ENCODE measurements at regions of chr4 and their contacts with region 1.

Region 1: DNA sequence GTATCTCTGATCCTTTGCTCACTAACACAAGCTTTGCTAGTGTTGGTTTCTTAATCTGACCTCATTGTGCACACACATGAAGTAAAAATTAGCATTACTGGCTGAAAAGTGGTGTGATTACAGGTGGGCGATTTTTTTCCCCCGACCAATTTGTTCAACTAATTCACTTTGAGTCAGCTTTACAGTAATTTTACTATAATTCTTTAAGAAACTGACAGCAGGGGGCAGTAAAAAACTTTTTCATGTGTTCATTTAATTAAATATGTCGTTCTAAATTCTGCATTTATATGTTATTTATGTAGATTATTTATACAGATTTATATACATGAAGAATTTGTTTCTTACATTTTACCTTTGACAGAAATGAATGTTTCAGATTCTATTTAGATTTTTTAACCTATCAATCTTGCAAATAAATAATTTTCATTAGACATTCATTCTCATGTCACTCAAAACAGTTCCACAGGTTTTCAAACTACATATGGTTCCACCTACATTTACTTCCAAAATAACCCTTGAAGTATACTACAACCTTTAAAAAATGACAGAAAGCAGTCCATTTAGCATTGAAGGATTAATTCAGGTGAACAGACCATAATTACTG is 17.5 kb downstream of the PALLD start:
- DNase-seq: no peak
- H3K4me3 Mint-ChIP-seq: no peak overlapping the region
- H3K27ac Mint-ChIP-seq: no peak overlapping the region
- H3K4me1 Mint-ChIP-seq: peaks cover 30% of the 10 kb centered on the region
- H3K27me3 Mint-ChIP-seq: no peaks in the 10 kb centered on the region

Region 2: GRCh38 chr4:168183717-168184608 is 330.4 kb before region 1 on chr4:
- CTCF ChIA-PET with region 1: no interaction called
- POLR2A ChIA-PET with region 1: no interaction called
- intact Hi-C with region 1: loop called (anchors 1 kb)
- DNase-seq: no peak
- H3K4me3 Mint-ChIP-seq: no peak overlapping the region
- H3K27ac Mint-ChIP-seq: no peak overlapping the region
- H3K4me1 Mint-ChIP-seq: no peaks in the 10 kb centered on the region
- H3K27me3 Mint-ChIP-seq: no peaks in the 10 kb centered on the region

Region 3: GRCh38 chr4:168480931-168481611 is 33.3 kb before region 1 on chr4:
- CTCF ChIA-PET with region 1: interaction called, 4 read pairs
- POLR2A ChIA-PET with region 1: interaction called, 5 read pairs
- intact Hi-C with region 1: loop called (anchors 1 kb)
- DNase-seq: peak; percentile 53
- H3K4me3 Mint-ChIP-seq: peak overlapping the region; percentile 85
- H3K27ac Mint-ChIP-seq: peak overlapping the region; percentile 88
- H3K4me1 Mint-ChIP-seq: peaks cover 51% of the 10 kb centered on the region
- H3K27me3 Mint-ChIP-seq: no peaks in the 10 kb centered on the region

Region 4: GRCh38 chr4:168569066-168569970 is 55.0 kb after region 1 on chr4:
- CTCF ChIA-PET with region 1: no interaction called
- POLR2A ChIA-PET with region 1: no interaction called
- intact Hi-C with region 1: loop called (anchors 1 kb)
- DNase-seq: peak; percentile 40
- H3K4me3 Mint-ChIP-seq: no peak overlapping the region
- H3K27ac Mint-ChIP-seq: no peak overlapping the region
- H3K4me1 Mint-ChIP-seq: peaks cover 12% of the 10 kb centered on the region
- H3K27me3 Mint-ChIP-seq: peaks cover 7% of the 10 kb centered on the region

Region 5: DNA sequence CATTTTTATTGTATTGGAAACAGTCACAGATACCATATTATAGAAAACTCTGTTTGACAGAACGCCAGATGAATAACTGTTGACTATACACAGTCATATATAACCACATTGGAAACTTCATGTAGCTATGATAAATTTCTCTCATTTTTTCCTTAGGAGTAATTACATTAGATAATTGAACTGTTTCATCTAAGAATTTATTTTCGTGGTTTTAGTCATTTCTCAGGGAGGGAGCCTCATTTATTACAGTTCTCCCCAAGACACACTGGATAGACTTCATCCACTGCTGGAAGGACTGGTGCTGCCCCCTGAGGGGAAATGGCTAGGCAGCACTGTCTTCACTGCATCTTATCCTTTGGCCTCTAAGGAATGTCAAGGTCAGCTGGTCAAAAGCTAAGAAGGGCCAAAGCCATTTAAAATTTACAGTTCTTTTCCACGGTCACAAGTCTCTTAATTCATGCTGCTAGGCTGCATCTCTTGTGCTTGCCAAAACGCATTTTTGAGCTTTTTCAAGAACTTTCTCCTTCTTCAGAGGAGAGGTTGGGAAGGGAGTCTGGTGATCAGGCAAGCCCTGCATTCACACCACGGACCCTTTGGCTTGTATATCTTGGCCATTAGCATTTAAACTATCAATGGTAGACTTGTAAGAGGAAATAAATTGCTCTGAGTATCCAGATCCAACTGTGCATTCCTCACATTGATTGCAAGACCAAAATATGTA is 350.6 kb after region 1 on chr4:
- CTCF ChIA-PET with region 1: no interaction called
- POLR2A ChIA-PET with region 1: no interaction called
- intact Hi-C with region 1: loop called (anchors 1 kb)
- DNase-seq: no peak
- H3K4me3 Mint-ChIP-seq: no peak overlapping the region
- H3K27ac Mint-ChIP-seq: peak overlapping the region; percentile 80
- H3K4me1 Mint-ChIP-seq: peaks cover 43% of the 10 kb centered on the region
- H3K27me3 Mint-ChIP-seq: peaks cover 14% of the 10 kb centered on the region

Region 6: DNA sequence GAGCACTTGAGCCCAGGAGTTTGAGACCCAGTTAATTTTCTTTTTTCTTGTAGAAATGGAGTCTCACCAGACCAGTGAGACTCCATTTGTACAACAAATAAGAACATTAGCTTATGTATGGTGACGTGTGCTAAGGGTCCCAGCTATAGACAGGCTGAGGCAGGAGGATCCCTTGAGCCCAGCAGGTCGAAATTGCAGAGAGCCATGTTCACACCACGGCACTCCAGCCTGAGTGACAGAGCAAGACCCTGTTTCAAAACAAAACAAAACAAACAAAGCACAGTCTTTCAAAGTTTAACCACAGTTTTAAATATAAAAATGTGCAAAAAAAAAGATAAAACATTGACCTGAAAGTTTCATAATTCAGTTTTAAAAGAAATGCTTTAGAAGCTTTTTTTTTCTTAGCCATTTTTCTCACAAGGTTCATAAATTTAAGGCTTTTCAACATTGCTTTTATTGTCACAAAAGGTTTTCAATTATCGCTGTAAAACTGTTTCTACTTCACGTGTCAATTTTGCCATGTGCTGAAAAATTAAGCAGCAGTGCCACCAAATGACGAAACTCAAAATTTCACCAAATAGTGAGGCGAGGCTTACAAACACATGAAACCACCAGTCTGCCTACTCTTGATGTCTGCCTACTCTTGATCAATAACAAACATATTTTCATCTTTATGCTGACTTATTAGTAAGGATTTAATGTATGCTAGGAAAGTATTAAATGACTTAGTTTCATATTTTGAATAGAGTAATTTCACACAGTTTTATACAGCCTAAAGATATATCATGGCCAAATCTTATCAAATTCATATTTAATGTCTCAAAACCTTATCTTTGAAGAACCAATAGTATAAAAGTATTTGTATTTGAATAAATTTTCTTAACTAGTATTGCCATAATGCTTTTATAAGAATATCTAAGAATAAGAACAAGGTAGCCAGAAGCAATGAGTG is 971.7 kb after region 1 on chr4:
- CTCF ChIA-PET with region 1: no interaction called
- POLR2A ChIA-PET with region 1: no interaction called
- intact Hi-C with region 1: loop called (anchors 5 kb)
- DNase-seq: peak; percentile 43
- H3K4me3 Mint-ChIP-seq: no peak overlapping the region
- H3K27ac Mint-ChIP-seq: no peak overlapping the region
- H3K4me1 Mint-ChIP-seq: peaks cover 2% of the 10 kb centered on the region
- H3K27me3 Mint-ChIP-seq: no peaks in the 10 kb centered on the region